ENCODE measurements at regions of chr16 and their contacts with region 1.

Region 1: GRCh38 chr16:80084685-80085084 is 456.1 kb upstream of the DYNLRB2 start:
- DNase-seq: peak; percentile 57
- H3K4me3 ChIP-seq: no peak overlapping the region
- H3K27ac ChIP-seq: no peak overlapping the region
- H3K4me1 ChIP-seq: no peaks in the 10 kb centered on the region
- H3K27me3 ChIP-seq: no peaks in the 10 kb centered on the region
- CTCF ChIP-seq: peak; percentile 58 to 72

Region 2: GRCh38 chr16:78925083-78925767 is 1159.5 kb before region 1 on chr16:
- CTCF ChIA-PET with region 1: no interaction called
- dilution Hi-C with region 1: no loop called
- in situ Hi-C with region 1: no loop called
- intact Hi-C with region 1: loop called (anchors 10 kb)
- DNase-seq: no peak
- H3K4me3 ChIP-seq: no peak overlapping the region
- H3K27ac ChIP-seq: no peak overlapping the region
- H3K4me1 ChIP-seq: no peaks in the 10 kb centered on the region
- H3K27me3 ChIP-seq: peaks cover 2% of the 10 kb centered on the region
- CTCF ChIP-seq: peak; percentile 46 to 58

Region 3: GRCh38 chr16:79997257-79997656 is 87.4 kb before region 1 on chr16:
- CTCF ChIA-PET with region 1: no interaction called
- dilution Hi-C with region 1: no loop called
- in situ Hi-C with region 1: no loop called
- intact Hi-C with region 1: loop called (anchors 1 kb)
- DNase-seq: no peak
- H3K4me3 ChIP-seq: no peak overlapping the region
- H3K27ac ChIP-seq: no peak overlapping the region
- H3K4me1 ChIP-seq: peaks cover 4% of the 10 kb centered on the region
- H3K27me3 ChIP-seq: no peaks in the 10 kb centered on the region
- CTCF ChIP-seq: peak; percentile 48 to 59

Region 4: GRCh38 chr16:80125677-80126076 is 41.0 kb after region 1 on chr16:
- CTCF ChIA-PET with region 1: no interaction called
- dilution Hi-C with region 1: no loop called
- in situ Hi-C with region 1: no loop called
- intact Hi-C with region 1: no loop called
- DNase-seq: no peak
- H3K4me3 ChIP-seq: no peak overlapping the region
- H3K27ac ChIP-seq: no peak overlapping the region
- H3K4me1 ChIP-seq: peaks cover 7% of the 10 kb centered on the region
- H3K27me3 ChIP-seq: no peaks in the 10 kb centered on the region
- CTCF ChIP-seq: no peak

Region 5: DNA sequence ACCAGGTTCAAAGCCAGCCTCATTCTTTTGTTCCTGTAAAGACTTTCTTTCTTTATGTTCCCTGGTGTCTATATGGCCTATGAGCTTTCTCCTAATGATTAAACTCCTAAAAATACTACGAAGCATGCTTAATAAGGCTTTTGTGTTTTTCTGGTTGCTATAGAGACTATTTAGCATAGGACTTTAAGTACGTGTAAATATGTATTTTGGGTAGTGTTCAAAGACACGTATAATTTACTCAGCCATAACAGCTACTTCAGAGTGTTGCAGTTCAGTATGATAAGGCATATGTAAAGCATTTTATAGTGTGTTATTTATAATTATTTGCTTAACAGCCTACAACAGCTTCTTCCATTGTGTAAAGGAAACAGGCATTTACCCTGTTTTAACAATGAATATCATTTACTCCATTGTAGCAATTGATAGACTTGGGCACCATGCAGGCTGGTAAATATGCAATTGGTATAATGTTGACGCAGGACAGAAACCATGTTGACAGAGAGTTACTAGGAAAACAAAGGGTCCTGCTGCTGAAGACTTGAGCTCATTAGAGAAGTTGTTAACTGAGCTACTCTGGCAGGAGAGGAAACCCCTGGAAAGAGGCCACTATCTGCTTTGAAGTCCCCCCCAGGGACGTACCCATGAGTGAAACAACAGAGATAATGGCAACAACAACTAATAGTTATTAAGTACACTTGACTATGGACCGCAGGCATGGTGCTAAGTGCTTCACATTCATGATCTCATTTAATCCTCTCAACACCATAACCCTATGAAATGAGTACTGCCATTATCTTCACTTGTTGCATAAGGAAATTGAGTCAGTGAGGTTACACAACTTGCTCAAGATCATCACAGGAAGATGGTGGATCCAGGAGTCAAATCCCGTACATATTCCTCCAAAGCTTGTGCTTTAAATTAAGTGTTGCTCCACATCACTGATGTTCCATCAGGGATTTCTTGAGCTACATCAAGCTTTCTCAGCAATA is 113.9 kb after region 1 on chr16:
- CTCF ChIA-PET with region 1: no interaction called
- dilution Hi-C with region 1: no loop called
- in situ Hi-C with region 1: no loop called
- intact Hi-C with region 1: no loop called
- DNase-seq: no peak
- H3K4me3 ChIP-seq: peak overlapping the region in 1 of 3 experiments; percentile 12
- H3K27ac ChIP-seq: peak overlapping the region; percentile 99
- H3K4me1 ChIP-seq: peaks cover 25% of the 10 kb centered on the region
- H3K27me3 ChIP-seq: no peaks in the 10 kb centered on the region
- CTCF ChIP-seq: no peak

Region 6: DNA sequence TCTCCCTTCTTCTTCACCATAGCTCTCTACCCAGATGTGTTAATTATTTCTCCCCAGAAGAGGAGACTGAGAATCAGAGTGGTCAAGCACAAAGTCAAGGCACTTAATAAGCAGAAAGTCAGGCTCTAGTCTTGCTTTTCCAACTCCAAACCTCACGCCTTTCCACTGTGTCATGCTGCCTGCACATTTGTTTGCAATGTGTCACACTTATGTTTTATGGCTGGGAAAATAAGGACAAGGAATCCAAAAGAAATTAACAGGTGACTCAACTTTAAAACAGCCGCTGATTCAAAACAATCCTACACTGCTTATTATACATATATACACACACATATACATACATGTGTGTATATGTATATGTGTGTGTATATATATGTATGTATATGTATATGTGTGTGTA is 200.4 kb after region 1 on chr16:
- CTCF ChIA-PET with region 1: no interaction called
- dilution Hi-C with region 1: no loop called
- in situ Hi-C with region 1: no loop called
- intact Hi-C with region 1: no loop called
- DNase-seq: peak; percentile 78
- H3K4me3 ChIP-seq: no peak overlapping the region
- H3K27ac ChIP-seq: peak overlapping the region; percentile 1
- H3K4me1 ChIP-seq: peaks cover 9% of the 10 kb centered on the region
- H3K27me3 ChIP-seq: no peaks in the 10 kb centered on the region
- CTCF ChIP-seq: no peak

Region 7: GRCh38 chr16:80466024-80466987 is 381.6 kb after region 1 on chr16:
- CTCF ChIA-PET with region 1: no interaction called
- dilution Hi-C with region 1: no loop called
- in situ Hi-C with region 1: no loop called
- intact Hi-C with region 1: loop called (anchors 2 kb)
- DNase-seq: peak; percentile 35
- H3K4me3 ChIP-seq: no peak overlapping the region
- H3K27ac ChIP-seq: no peak overlapping the region
- H3K4me1 ChIP-seq: peaks cover 6% of the 10 kb centered on the region
- H3K27me3 ChIP-seq: no peaks in the 10 kb centered on the region
- CTCF ChIP-seq: peak; percentile 84 to 92